ENCODE measurements at regions of chr3 and their contacts with region 1.

Region 1: GRCh38 chr3:132716372-132716771 is 5.8 kb downstream of the NPHP3 start:
- DNase-seq: no peak
- H3K4me3 ChIP-seq: no peak overlapping the region
- H3K27ac ChIP-seq: no peak overlapping the region
- H3K4me1 ChIP-seq: peaks cover 18% of the 10 kb centered on the region
- H3K27me3 ChIP-seq: no peaks in the 10 kb centered on the region
- CTCF ChIP-seq: no peak
- POLR2A ChIP-seq: no peak

Region 2: DNA sequence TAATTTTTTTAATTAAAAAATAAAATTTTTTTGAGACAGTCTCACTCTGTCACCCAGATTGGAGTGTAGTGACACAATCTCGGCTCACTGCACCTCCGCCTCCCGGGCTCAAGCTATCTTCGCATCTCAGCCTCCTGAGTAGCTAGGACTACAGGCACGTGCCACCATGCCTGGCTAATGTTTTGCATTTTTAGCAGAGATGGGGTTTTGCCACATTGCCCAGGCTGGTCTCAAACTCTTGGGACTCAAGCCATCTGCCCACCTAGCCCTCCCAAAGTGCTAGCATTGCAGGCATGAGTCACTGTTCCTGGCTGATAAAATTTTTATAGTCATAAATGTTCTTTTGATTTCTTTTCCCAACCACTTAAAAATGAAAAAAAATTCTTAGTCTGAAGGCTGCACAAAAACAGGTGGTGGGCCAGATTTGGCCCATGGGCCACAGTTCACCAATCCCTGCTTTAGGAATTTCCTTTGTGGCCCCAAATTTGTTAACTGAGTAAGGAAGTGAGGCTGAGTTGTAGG is 47.1 kb before region 1 on chr3:
- CTCF ChIA-PET with region 1: no interaction called
- POLR2A ChIA-PET with region 1: no interaction called
- dilution Hi-C with region 1: no loop called
- intact Hi-C with region 1: no loop called
- DNase-seq: peak; percentile 45
- H3K4me3 ChIP-seq: no peak overlapping the region
- H3K27ac ChIP-seq: no peak overlapping the region
- H3K4me1 ChIP-seq: peaks cover 26% of the 10 kb centered on the region
- H3K27me3 ChIP-seq: no peaks in the 10 kb centered on the region
- CTCF ChIP-seq: no peak
- POLR2A ChIP-seq: no peak

Region 3: GRCh38 chr3:132695422-132695821 is 20.9 kb before region 1 on chr3:
- CTCF ChIA-PET with region 1: no interaction called
- POLR2A ChIA-PET with region 1: interaction called, 10 read pairs
- dilution Hi-C with region 1: no loop called
- intact Hi-C with region 1: no loop called
- DNase-seq: peak; percentile 34
- H3K4me3 ChIP-seq: no peak overlapping the region
- H3K27ac ChIP-seq: no peak overlapping the region
- H3K4me1 ChIP-seq: no peaks in the 10 kb centered on the region
- H3K27me3 ChIP-seq: no peaks in the 10 kb centered on the region
- CTCF ChIP-seq: no peak
- POLR2A ChIP-seq: no peak

Measured in endothelial cell of umbilical vein (primary cell).